ENCODE measurements at regions of chr7 and their contacts with region 1.

Region 1: DNA sequence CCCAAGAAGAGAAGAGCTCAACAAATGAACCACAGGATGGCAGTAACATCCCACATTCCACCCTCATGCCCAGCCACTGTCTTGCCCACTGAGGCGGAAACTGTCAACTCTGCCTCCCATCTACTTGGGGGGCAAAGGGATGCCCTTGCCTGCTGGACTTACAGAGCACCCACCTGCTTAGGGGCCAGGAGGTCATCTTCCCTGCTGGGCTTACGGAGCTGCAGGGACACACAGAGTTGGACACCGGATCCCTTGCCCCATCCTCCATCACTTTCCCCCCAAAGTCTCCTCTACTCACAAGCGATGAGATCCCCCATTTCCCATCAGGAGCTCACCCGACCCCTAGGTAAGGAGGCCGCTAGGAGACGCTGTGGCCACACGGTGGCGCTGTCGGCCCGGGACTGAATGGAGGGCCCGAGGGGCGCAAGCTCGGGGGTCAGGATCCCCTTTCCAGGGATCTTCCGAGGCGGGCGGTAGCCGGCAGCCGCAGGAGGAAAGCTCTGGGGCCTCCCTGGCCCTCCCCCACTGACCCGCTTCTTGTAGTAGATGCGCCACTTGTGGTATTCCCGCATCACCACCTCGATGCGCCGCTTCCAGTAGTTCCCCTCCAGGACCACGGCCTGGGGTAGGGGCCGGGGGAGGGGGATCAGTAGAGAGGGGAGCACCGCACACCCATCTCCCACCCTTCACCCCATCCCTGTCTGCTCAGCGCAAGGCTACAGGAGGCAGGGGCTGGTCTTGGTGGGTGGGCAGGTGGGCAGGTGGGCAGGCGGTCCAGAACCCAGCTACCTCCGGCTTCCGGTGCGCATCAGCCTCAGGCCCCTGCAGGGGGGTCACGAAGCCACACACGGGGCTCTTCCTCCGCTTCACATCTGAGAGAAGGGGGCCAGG is 17.3 kb downstream of the MLXIPL start:
- DNase-seq: peak; percentile 69
- ATAC-seq: peak; percentile 76

Region 2: DNA sequence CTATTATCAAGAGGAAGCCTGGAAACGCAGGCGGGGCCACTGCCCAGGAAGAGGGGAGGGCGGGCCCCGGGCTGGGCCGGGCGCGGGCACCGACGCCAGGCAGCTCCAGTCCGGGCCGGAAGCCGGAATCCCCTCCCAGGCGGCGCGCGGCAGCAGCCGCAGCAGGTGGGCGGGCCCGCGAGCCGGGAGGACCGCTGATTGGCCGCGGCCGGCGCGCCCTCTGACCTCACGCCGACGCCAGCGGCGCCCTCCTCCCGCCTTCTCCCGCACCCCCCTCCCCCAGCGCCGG is 50.0 kb before region 1 on chr7:
- intact Hi-C with region 1: no loop called
- DNase-seq: peak; percentile 96
- ATAC-seq: peak; percentile 98

Region 3: DNA sequence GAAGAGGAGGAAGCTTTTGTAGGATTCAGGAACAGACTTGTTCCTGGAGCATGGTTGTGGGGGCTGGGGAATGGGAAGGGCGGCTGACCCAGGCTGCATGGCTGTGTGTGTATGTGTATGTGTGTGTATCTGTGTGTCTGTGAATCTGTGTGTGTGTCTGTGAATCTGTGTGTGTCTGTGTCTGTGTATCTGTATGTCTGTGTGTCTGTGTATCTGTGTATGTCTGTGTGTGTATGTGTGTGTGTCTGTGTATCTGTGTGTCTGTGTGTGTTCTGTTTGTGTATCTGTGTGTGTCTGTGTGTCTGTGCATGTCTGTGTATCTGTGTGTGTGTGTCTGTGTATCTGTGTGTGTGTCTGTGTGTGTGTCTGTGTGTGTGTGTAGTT is 119.0 kb after region 1 on chr7:
- intact Hi-C with region 1: loop called (anchors 2 kb)
- DNase-seq: no peak
- ATAC-seq: no peak

Region 4: GRCh38 chr7:73851410-73852234 is 244.6 kb after region 1 on chr7:
- intact Hi-C with region 1: loop called (anchors 10 kb)
- DNase-seq: no peak
- ATAC-seq: peak; percentile 54